H1 (cell line): ENCODE measurements at regions of chr17 and their contacts with region 1.

Region 1: DNA sequence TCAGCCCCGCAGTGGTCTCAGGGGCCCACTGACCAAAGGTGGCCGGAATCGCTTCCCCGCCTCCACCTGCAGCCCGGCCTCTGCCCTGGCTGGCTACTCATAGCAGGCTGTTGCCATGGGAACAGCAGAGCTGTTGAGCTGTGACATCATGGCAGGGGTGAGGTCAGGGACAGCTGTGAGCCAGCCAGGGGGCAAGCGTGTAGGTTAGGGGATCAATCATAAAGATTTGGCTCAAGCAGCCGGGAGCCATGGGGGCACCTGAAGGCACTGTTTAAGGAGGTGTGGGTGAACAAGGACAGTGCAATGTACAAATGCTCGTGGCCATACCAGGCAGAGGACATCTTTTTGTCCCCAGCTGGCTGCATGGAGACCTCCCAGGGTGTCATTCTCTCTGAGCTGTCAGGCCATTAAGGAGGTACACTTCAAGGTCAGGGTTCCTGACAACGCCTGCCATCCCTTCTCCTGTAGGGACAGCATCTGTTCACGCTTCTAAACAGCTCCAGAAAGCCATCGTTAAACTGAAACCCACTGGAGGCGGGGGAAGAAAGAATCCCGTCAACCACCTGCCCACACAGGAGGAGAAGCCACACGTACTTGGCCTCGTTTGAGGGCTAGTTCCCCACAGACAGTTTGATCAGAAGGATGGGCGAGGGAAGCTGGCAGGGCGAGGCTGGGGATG is at the start of gene CEP295NL:
- DNase-seq: no peak
- H3K4me3 ChIP-seq: no peak within 1 kb of the TSS
- H3K27ac ChIP-seq: no peak within 1 kb of the TSS
- H3K4me1 ChIP-seq: peaks cover 4 to 26% (median 14%) of the 10 kb centered on the region in 4 experiments
- H3K27me3 ChIP-seq: no peaks in the 10 kb centered on the region
- CTCF ChIP-seq: no peak
- EP300 ChIP-seq: no peak
- POLR2A ChIP-seq: no peak
- RAD21 ChIP-seq: no peak
- total RNA-seq, gene CEP295NL: 1.4 and 2.0 TPM in 2 replicates

Region 2: GRCh38 chr17:78915872-78916632 is 12.8 kb after region 1 on chr17:
- CTCF ChIA-PET with region 1: interaction called, 20 read pairs
- POLR2A ChIA-PET with region 1: interaction called, 5 read pairs
- DNase-seq: no peak
- H3K4me3 ChIP-seq: no peak overlapping the region
- H3K27ac ChIP-seq: no peak overlapping the region
- H3K4me1 ChIP-seq: peaks cover 0 to 11% (median 4%) of the 10 kb centered on the region in 4 experiments; a peak in 6 of 7 replicates
- H3K27me3 ChIP-seq: no peaks in the 10 kb centered on the region
- CTCF ChIP-seq: no peak
- EP300 ChIP-seq: no peak
- POLR2A ChIP-seq: no peak
- RAD21 ChIP-seq: no peak

Region 3: GRCh38 chr17:78925234-78925633 is 22.0 kb after region 1 on chr17 and contains the start of gene TIMP2:
- CTCF ChIA-PET with region 1: interaction called, 4 read pairs
- POLR2A ChIA-PET with region 1: interaction called, 12 read pairs
- DNase-seq: peak; percentile 58 to 87
- H3K4me3 ChIP-seq: peak within 1 kb of the TSS; percentile 60 to 83 (median 70)
- H3K27ac ChIP-seq: peak within 1 kb of the TSS; percentile 70; the same call in 1 of the 2 replicates
- H3K4me1 ChIP-seq: peaks cover 4 to 16% (median 10%) of the 10 kb centered on the region in 4 experiments
- H3K27me3 ChIP-seq: no peaks in the 10 kb centered on the region
- CTCF ChIP-seq: peak in 2 of 3 experiments; percentile 13 to 30; a peak in 2 of 4 replicates
- EP300 ChIP-seq: no peak
- POLR2A ChIP-seq: peak in 1 of 2 experiments; percentile 75; a peak in 1 of 3 replicates
- RAD21 ChIP-seq: peak in 1 of 2 experiments; percentile 24; a peak in 2 of 4 replicates
- total RNA-seq, gene TIMP2: 42.7 and 43.3 TPM in 2 replicates

Region 4: GRCh38 chr17:79020631-79021301 is 117.5 kb after region 1 on chr17:
- CTCF ChIA-PET with region 1: no interaction called
- POLR2A ChIA-PET with region 1: no interaction called
- DNase-seq: no peak
- H3K4me3 ChIP-seq: no peak overlapping the region
- H3K27ac ChIP-seq: no peak overlapping the region
- H3K4me1 ChIP-seq: peaks cover 2 to 7% (median 4%) of the 10 kb centered on the region in 4 experiments; a peak in 4 of 7 replicates
- H3K27me3 ChIP-seq: peaks cover 18 to 59% (median 49%) of the 10 kb centered on the region in 4 experiments
- CTCF ChIP-seq: no peak
- EP300 ChIP-seq: no peak
- POLR2A ChIP-seq: no peak
- RAD21 ChIP-seq: no peak